ENCODE measurements at regions of chr1 and their contacts with region 1.

Region 1: GRCh38 chr1:111619635-111620440 is at the start of gene RAP1A:
- DNase-seq: peak; percentile 98
- total RNA-seq, gene RAP1A: 114 TPM

Region 2: DNA sequence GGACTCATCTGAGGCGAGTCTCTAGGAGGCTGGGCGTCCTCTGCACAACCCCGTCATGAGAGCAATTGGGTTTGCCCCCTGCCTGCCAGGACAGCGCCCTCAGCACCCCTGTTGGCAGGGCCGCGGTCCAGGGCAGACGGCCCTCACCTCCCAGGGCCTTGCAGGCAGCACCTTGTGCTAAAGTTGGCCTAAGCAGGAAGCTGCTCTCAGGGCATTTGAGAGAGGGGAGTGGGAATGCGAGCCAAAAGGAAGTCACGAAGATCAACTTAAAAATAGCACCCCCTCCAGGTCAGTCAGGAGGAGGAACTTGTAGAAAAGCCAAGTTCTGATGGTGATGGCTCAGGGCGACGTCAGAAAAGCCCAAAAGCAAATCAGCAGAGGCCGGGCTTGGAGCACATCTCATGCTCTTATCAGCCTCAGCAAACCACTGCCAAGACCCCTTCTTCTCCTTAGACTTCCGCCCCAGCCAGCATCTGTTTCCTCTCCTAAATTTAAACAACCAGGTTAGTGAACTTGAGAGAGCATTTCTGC is 103.8 kb before region 1 on chr1:
- intact Hi-C with region 1: loop called (anchors 10 kb)
- DNase-seq: peak; percentile 81

Region 3: DNA sequence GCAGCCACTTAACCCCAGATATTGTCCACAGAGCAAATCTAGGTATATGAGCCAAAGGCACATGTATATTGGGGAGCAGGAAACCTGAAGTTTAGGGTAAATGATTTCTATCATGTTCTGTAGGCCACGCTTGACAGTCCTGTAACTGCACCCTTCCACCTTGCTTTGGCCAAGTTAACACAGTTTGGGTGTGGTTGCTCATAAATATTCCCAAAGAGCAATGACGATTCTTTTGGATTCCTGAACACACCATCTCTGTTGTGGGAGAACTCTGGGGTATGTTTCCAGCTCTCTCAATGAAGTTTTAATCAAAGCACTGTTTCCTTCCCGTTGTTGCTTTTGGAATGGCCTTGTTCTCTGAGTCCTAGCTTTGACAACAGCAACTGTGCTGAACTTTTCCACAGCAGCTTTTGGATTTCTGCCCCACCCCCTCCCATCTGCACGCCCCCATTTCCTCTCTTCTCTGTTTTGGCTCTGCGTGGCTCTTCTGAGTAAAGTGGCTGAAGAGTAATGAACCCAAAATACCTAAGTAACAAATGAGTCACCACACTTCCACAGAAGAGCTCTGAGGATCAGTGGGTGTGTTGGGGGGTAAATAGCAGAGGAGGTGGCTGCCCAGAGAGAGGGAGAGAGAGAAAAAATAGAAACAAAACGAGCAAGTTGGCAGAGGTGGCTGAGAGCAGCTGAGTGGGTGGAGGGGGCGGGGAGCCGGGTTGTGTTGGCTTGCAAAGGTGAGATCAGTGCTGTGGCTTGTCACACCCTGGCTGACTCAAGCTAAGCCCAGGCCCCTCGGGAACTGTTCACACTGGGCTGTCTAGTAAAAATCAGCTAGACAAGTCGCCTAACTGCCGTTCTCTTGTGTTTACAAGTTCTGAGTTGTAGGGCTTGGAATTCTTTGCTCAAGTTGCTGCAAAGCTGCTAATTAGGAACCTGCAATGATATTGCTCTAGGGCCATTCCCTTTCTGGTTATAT is 27.2 kb before region 1 on chr1:
- intact Hi-C with region 1: loop called (anchors 1 kb)
- DNase-seq: peak; percentile 91

Region 4: DNA sequence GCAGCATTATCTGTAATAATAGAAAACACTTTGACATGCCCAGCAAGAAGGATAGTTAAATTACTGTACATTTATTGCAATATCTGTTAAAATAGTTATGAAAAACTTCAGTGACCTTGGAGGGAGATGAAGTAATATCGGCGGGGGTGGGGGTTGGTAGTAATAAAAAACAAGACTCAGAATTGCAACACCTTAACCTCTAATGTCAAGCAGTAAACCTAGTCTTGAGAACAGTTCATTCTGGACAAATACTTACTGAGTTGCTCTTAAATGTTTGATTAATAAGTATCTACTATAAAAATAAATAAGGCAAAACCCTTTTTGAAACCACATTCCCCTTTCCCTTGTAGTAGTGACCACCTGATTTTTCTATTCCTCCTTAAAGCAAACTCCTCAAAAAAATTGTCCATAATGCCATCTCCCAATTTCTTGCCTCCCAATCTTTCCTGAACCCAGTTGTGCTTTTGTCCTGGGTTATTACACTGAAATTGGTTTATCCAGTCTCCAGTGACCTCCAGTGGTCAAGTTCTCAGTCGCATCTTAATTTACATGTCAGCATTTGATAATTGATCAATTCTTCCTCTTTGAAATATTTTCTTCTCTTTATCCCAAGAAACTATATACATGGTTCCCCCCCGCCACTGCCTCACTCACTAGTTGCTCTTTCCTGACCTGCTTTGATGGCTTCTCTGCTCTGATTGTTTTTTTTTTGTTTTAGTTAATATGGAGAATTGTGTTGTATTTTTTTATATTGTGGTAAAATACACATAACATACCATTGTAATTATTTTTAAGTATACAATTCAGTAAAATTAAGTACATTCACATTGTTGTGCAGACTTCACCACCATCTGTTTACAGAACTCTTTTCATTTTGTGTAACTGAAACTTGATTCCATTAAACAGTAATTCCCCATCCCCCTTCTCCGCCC is 36.5 kb after region 1 on chr1:
- intact Hi-C with region 1: no loop called
- DNase-seq: no peak

Region 5: DNA sequence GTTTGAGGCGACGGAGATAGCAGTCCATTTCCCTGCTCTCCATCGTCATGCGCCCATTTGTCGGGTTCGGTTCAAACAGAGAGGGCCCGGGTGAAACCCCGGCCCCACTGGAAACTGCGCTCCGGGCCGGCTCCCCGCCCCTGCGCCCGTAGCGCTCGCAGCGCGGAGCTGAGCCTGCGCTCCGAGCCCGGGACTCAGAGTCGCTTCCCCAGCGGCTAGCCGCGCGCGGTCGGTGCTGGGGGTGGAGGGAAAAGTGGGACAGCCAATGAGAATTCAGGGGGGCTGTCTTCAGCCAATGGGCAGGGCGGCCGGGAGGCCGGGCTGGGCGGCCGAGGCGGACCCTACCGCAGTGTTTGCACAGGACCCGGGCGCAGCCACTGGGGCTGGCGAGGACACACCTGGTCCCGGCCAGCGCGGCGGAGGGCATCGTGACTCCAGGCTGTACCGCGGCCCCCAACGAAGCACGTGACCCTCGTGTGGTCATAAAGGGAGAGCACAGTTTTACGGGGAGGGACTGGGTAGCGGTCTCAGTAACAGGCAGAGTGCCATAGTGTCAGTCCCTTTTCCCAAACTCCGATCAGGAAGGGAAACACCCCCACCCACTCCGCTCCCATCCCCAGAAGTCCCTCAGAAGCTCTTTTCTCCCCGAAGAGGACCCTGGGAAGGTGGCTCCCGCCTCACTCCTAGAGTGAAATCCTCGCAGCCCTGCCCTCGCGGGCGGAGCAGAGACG is 119.5 kb after region 1 on chr1 and contains the start of gene INKA2:
- intact Hi-C with region 1: loop called (anchors 5 kb)
- DNase-seq: peak; percentile 98
- total RNA-seq, gene INKA2: 13.7 TPM

Region 6: DNA sequence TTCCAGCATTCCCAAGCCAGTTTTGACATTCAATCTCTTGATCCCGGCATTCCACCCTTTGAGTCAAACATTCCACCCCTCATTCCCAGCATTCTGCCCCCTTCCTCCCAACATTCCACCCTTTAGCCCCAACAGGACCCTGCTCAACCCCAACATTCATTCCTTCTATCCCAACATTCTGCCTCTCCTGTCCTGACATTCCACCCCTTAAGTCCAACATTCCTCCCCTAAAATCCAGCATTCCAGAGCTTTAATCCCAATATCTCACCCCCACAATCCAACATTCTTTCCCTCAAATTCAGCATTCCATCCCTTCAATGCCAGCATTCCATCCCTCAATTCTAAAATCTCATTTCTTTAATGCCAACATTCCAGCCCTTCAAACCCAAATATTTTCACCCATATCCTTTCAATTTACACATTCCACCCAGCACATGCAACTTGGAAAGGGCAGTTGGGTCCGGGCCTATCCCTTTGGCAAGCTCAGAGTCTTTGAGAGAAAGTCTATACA is 158.8 kb after region 1 on chr1:
- intact Hi-C with region 1: no loop called
- DNase-seq: no peak